ENCODE measurements at regions of chr18 and their contacts with region 1.

Region 1: DNA sequence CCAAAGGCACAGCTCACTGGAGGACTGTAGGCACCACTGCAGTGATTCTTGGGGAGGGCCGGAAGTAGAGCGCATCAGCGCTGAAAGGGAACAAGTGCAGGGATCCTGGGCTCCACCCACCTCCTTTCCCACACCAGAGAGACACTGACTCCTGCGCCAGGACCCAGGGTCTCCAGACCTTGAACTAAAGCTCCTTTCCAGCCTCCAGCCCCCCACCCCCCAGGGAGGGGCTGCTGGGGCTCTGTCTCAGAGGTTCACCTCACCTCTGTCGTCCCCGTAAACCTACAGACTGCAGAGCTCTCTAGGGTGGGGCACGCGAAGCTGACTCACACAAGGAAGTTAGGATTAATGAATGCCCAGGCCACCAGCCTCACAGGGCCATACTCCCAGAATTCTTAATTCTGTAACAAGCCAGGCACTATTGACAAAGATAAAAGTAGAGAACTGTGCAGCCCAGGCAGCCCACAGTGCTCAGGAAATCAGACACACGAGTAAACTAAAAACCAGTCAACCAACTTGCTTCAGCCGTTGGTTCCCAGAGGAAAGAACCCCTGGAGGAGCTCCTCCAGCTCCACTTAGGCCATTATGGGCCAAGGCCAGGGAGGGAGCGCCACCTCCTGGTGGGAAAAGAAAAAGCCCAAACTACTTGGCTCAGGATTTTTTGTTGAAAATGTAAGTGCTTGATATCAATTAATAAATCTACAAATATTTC is 45.1 kb upstream of the ACAA2 start:
- DNase-seq: no peak
- ATAC-seq: peak; percentile 62

Region 2: DNA sequence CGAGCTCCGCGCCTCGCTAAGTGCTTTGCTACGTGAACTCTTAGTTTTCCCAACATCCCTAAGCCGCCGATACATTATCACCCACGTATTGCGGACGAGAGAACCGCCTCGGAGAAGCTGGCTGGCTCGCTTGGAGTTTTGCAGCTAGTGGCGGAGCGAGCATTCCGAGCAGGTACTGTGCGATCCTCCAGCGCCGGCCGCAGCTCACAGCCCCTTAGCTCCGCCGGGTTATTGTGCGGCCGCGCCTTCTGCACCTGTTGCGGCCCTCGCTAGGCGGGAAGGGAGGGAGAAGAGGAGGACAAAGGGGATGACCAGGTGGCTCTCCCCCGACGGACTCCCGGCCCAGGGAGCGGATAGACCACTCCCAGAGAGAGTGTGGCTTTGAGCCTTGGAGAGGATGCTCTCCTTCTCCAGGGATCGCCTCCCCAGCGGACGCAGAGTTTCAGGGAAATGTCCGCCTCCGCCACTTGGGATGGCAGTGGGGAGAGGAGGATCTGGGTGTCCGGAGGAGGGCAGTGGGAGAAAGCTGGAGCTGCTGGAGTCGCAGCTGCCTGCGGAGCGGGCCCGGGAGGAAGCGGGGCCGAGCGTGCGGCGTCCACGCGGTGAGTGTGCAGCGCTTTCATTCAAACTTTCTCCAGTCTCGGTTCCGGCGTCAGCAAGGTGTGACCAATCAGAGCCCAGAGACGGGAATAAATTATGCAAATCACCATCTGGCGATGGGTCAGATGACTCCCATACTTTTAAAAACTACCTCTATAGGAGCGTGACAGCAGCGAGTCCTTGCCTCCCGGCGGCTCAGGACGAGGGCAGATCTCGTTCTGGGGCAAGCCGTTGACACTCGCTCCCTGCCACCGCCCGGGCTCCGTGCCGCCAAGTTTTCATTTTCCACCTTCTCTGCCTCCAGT is 296.9 kb before region 1 on chr18 and contains the start of gene LIPG:
- intact Hi-C with region 1: loop called (anchors 2 kb)
- DNase-seq: no peak
- ATAC-seq: peak; percentile 4
- total RNA-seq, gene LIPG: not detected

Region 3: DNA sequence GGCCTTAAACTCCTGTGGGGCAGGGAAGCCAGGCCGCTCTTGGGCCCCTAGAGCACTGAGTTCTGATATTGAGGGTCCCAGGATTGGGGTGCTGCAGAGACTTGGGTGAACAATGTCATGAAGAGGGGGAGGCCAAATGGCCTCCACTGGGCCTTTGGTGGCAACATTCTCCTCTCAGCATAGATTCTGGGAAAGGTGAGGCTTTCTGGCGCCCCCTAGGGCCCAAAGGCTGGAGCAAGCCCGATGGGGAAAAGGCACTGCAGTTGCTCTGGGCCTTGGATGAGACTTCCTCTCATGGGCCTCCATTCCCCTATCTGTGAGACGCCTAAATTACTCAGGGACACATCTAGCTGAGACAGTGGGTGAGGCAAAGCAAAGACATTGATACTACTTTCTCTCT is 129.9 kb before region 1 on chr18:
- intact Hi-C with region 1: no loop called
- DNase-seq: no peak
- ATAC-seq: no peak